OCI-LY7 (cell line): ENCODE measurements at regions of chr19 and their contacts with region 1.

Region 1: DNA sequence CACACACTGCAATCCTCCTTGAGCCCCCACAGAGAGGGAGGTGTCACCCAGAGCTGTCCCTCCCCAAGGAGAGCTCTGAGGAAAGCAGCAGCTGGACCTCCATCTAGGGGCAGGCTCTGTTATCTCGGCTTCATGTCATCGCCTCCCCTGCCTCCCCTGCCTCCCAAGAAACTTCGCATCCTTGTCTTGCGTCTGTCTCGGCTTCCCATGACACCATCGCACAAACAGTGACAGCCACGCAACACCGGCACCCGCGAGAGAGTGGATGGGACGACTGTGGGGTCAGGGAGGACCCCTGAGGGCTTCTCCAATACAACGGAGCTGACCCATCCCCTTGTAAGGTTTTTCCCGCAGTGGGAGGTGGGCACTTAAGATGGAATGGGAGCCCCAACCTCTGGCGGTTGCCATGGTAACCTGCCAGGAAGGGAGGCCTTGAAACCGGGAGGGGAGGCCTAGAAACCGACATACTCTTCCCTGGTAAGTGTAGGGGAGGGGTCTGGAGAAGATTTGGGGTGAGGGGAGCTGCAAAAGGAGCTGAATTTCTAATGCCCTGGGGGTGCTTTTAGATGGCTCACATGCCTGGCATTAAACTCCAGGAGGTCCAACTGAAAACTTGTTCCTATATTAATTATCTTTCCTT is 16.3 kb downstream of the TLE2 start:
- DNase-seq: no peak
- H3K4me3 ChIP-seq: no peak overlapping the region
- H3K27ac ChIP-seq: no peak overlapping the region
- H3K4me1 ChIP-seq: peaks cover 4% of the 10 kb centered on the region
- CTCF ChIP-seq: no peak

Region 2: GRCh38 chr19:2986951-2987524 is 25.7 kb before region 1 on chr19:
- CTCF ChIA-PET with region 1: no interaction called
- POLR2A ChIA-PET with region 1: no interaction called
- intact Hi-C with region 1: loop called (anchors 2 kb)
- DNase-seq: no peak
- H3K4me3 ChIP-seq: no peak overlapping the region
- H3K27ac ChIP-seq: no peak overlapping the region
- H3K4me1 ChIP-seq: peaks cover 13% of the 10 kb centered on the region
- CTCF ChIP-seq: no peak